ENCODE measurements at regions of chr17 and their contacts with region 1.

Region 1: GRCh38 chr17:39153599-39154051 is 2.2 kb upstream of the PLXDC1 start:
- DNase-seq: peak; percentile 88
- H3K4me3 ChIP-seq: peak overlapping the region; percentile 75
- H3K27ac ChIP-seq: peak overlapping the region; percentile 92
- H3K4me1 ChIP-seq: peaks cover 37% of the 10 kb centered on the region
- H3K27me3 ChIP-seq: peaks cover 36% of the 10 kb centered on the region
- CTCF ChIP-seq: no peak

Region 2: DNA sequence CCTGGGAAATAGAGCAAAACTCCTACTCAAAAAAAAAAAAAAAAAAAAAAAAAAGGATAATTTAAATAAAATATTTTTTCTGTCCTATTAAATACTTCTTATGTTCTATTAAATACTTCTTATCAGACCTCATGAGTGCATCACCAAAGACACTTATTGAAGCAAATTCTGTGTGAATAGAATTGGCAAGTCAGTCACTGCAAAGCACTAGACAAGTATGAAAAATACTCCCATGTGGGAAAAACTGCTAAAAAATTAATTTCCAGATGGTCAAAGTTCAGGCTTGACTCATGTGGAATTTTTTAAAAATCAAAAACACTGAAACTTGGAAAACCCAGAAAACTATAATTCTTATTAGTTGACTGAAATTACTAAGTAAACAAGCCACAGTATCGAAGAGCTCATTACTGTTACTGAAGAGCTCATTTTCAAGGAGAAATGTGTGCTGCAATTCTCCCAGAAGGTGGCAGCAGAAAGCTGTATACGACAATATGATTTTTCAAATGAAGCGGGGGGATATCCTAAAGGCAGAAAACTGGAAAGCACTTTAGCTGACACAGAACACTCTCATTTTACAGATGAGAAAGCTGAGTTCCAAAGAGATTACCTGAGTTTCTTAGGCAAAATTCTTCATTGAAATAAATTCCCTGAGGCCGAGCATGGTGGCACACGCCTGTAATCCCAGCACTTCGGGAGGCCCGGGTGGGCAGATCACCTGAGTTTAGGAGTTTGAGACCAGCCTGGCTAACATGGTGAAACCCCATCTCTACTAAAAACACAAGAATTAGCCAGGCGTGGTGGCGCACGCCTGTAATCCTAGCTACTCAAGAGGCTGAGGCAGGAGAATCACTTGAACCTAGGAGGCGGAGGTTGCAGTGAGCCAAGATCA is 170.5 kb before region 1 on chr17:
- intact Hi-C with region 1: loop called (anchors 5 kb)
- DNase-seq: no peak
- H3K4me3 ChIP-seq: no peak overlapping the region
- H3K27ac ChIP-seq: peak overlapping the region; percentile 70
- H3K4me1 ChIP-seq: no peaks in the 10 kb centered on the region
- H3K27me3 ChIP-seq: no peaks in the 10 kb centered on the region
- CTCF ChIP-seq: peak; percentile 89